ENCODE measurements at regions of chr14 and their contacts with region 1.

Region 1: DNA sequence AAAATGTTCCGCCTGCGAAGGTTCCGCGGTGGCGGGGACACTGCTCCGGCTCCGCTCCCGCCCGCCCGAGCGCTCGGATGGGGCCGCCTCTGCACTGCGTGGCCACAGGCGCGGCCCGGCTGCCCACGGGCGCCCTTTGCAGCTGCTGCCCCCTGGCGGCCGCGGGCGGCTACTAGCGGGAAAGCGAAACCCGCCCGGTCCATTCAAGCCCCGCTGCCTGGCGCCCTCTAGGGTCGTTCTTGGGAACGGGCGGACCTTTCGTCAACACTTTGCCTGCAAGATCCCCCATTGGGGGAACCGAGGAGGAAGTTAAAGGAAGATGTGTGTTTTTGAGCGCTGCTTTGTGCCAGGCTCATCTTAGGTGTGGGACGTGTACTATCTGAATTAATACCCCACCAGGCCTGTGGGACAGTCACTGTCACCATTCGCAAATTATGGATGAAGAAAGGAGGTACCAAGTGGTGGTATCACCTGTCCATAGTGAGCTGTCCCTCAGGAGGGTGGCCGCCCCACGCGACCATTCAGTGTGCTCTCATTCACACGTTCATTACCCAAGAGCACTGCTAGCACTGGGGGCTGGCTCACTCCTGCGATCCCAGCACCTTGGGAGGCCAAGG is 19.4 kb downstream of the GPR132 start:
- DNase-seq: no peak
- H3K4me3 ChIP-seq: no peak overlapping the region
- H3K27me3 ChIP-seq: peaks cover 2% of the 10 kb centered on the region; the same call in 1 of the 2 replicates
- CTCF ChIP-seq: peak; percentile 97

Region 2: DNA sequence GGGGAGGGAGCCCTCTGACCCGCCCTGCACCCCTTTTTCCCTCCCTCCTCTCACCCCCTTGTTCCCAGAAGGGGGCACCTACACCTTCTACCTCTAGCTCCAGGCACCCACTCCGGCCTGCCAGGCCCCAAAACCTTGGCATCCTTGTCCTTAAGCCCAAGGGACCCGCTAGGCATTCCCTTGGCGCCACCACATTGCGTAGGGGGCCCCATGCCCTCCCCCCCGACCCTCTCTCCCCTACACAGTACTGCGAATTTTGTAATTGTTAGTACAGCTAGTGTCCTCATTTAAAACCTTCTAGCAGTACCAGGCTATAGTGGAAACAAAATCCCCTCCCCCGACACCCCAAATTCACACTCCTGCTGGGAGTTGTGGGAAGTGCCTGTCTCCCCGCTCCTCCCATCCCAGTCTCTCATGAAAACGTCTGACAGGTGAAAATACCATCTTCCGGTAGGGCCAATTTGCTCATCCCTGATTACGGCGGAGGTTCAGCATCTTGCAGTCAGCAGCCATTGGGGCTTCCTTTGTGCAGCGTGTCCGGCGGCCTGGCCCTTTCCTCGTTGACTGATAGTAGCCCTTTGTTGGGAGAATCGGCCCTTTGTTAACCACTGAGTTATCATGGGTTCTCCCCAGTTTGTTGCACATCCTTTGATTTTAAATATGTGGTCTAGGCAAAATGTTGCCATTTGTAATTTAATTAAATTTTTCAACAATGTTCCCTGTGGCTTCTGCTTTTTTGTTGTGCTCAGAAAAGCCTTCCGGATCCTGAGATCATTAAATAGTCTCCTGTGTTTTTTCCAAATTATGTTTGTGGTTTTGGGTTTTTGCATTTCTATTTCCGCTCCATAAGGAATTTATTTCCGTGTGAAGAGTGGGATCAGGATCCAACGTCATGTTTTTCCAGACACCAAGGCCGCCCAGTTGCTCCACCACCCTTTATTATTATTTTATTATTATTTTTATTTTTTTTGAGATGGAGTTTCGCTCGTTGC is 188.7 kb before region 1 on chr14:
- CTCF ChIA-PET with region 1: no interaction called
- POLR2A ChIA-PET with region 1: no interaction called
- DNase-seq: no peak
- H3K4me3 ChIP-seq: no peak overlapping the region
- H3K27me3 ChIP-seq: peaks cover 11% of the 10 kb centered on the region
- CTCF ChIP-seq: no peak

Region 3: GRCh38 chr14:104895786-104896661 is 149.8 kb before region 1 on chr14:
- CTCF ChIA-PET with region 1: interaction called, 55 read pairs
- POLR2A ChIA-PET with region 1: no interaction called
- DNase-seq: no peak
- H3K4me3 ChIP-seq: no peak overlapping the region
- H3K27me3 ChIP-seq: no peaks in the 10 kb centered on the region
- CTCF ChIP-seq: no peak

Region 4: DNA sequence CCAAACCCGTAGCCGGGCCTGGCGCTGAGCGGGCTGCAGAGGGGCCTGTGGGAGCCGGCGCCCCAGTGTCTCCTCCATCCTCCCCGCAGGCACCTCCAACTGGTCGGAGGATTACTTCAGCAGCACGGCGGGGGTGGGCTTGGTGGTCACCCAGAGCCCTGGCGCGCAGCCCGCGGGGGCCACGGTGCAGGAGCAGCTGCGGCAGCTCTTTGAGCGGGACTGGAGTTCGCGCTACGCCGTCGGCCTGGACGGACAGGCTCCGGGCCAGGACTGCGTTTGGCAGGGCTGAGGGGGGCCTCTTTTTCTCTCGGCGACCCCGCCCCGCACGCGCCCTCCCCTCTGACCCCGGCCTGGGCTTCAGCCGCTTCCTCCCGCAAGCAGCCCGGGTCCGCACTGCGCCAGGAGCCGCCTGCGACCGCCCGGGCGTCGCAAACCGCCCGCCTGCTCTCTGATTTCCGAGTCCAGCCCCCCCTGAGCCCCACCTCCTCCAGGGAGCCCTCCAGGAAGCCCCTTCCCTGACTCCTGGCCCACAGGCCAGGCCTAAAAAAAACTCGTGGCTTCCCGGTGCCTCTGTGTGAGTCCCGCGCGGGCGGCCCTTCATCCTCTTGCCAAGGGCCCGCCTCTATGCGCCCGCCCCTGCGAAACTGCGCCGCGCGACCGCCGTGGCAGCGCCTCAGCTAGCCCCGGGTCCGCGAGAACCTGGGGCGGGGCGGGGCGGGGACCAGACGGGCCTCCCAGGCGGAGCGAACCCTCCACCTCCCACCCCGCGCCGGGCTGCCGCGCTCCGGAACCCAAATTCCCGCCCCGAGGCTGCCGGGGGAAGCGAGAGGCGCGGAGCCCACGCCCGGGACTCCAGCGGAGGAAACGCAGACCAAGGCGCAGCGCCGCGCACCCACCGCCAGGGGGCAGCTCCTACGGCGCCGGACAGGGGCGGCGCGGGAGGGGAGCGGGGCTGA is 112.9 kb before region 1 on chr14:
- CTCF ChIA-PET with region 1: interaction called, 11 read pairs
- POLR2A ChIA-PET with region 1: no interaction called
- DNase-seq: peak; percentile 20
- H3K4me3 ChIP-seq: peak overlapping the region; percentile 52
- H3K27me3 ChIP-seq: peaks cover 4% of the 10 kb centered on the region; the same call in 1 of the 2 replicates
- CTCF ChIP-seq: peak; percentile 66

Region 5: DNA sequence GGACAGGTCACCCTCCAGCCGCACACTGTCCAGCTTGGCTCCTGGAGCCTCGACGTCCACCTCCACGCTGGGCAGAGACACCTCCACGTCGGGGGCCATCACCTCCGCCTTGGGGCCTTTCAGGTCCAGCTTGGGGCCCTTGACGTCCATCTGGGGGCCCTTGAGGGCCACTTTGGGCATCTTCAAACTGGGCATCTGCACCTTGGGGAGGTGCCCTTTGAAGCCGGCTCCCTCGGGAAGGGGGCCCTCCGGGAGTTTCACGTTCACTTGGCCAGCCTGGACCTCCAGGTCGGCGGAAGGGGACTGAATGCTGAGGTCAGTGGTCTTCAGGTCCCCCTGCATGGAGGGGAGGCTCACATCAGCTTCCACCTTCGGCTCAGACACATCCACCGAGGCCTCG is 95.8 kb before region 1 on chr14:
- CTCF ChIA-PET with region 1: no interaction called
- POLR2A ChIA-PET with region 1: no interaction called
- DNase-seq: no peak
- H3K4me3 ChIP-seq: no peak overlapping the region
- H3K27me3 ChIP-seq: no peaks in the 10 kb centered on the region
- CTCF ChIP-seq: no peak

Region 6: GRCh38 chr14:104985675-104986525 is 59.9 kb before region 1 on chr14 and contains the start of gene CLBA1:
- CTCF ChIA-PET with region 1: interaction called, 15 read pairs
- POLR2A ChIA-PET with region 1: no interaction called
- DNase-seq: no peak
- H3K4me3 ChIP-seq: peak within 1 kb of the TSS; percentile 67
- H3K27me3 ChIP-seq: no peaks in the 10 kb centered on the region
- CTCF ChIP-seq: 0 out of 2 replicates have a peak, but pooled peaks have one; percentile 5
- polyA plus RNA-seq, gene CLBA1: 4.5 and 5.9 TPM in 2 replicates

Region 7: DNA sequence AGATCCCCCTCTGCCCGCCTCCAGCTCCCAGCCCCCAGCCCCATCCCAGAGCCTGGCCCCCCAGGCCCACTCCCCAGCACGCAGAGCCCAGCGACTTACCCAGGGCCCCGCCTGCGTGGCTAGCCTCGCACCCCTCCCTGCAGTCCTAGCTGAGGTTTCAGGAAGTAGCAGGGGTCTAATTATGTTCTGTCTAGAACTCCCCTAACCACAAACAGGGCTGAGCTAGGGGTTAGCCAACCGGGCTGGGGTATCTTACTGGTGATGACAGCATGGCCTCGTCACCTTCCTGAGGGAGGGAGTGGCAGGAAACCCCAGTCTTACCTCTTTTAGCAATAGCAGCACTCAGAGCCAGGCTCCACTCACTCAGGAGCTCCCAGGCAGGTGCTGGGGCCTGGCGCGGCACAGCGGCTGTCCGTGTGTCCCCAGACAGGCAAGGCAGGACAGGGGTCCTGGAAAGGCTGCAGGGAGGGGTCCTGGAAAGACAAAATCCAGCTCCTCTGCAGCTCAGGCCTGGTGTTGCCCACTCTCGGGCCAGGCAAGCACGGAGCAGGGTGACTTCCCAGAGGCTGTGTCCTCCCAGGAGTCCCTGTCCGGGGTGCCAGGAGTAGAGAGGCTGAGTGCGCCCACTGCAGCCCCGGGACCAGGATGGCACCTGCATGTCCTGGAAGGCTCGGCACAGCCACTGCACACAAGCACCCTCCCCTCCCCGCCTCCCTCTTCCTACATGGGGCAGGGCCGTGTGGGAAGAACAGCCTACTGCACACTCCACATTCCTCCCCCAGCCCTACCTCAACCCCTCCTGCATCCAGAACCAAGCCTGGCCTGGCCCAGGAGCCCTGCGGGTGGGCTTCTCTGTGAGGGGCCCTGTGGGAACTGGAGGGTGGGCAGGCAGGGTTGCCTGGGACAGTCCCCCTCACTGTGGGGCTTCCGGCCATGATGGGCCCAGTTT is 19.7 kb after region 1 on chr14 and contains the start of gene GPR132:
- CTCF ChIA-PET with region 1: interaction called, 19 read pairs
- POLR2A ChIA-PET with region 1: no interaction called
- DNase-seq: no peak
- H3K4me3 ChIP-seq: no peak within 1 kb of the TSS
- H3K27me3 ChIP-seq: no peaks in the 10 kb centered on the region
- CTCF ChIP-seq: no peak
- polyA plus RNA-seq, gene GPR132: 0.06 and 0.13 TPM in 2 replicates

Region 8: GRCh38 chr14:105118656-105119403 is 73.0 kb after region 1 on chr14:
- CTCF ChIA-PET with region 1: no interaction called
- POLR2A ChIA-PET with region 1: no interaction called
- DNase-seq: no peak
- H3K4me3 ChIP-seq: no peak overlapping the region
- H3K27me3 ChIP-seq: peaks cover 11% of the 10 kb centered on the region
- CTCF ChIP-seq: no peak

Region 9: GRCh38 chr14:105709281-105710118 is 663.7 kb after region 1 on chr14:
- CTCF ChIA-PET with region 1: no interaction called
- POLR2A ChIA-PET with region 1: no interaction called
- DNase-seq: no peak
- H3K4me3 ChIP-seq: no peak overlapping the region
- H3K27me3 ChIP-seq: no peaks in the 10 kb centered on the region
- CTCF ChIP-seq: no peak

Measured in BJ (cell line).